HEK293 (cell line): ENCODE measurements at regions of chr19 and their contacts with region 1.

Region 1: GRCh38 chr19:34677386-34678084 is at the start of gene ZNF302:
- H3K4me3 ChIP-seq: peak within 1 kb of the TSS; percentile 68
- H3K27ac ChIP-seq: peak within 1 kb of the TSS; percentile 94
- H3K4me1 ChIP-seq: peaks cover 12% of the 10 kb centered on the region
- CTCF ChIP-seq: peak; percentile 65; the same call in 1 of the 2 replicates

Region 2: GRCh38 chr19:34662919-34663318 is 14.6 kb before region 1 on chr19:
- CTCF ChIA-PET with region 1: interaction called, 35 read pairs
- POLR2A ChIA-PET with region 1: interaction called, 7 read pairs
- H3K4me3 ChIP-seq: no peak overlapping the region
- H3K27ac ChIP-seq: no peak overlapping the region
- H3K4me1 ChIP-seq: no peaks in the 10 kb centered on the region; the same call in 1 of the 2 replicates
- CTCF ChIP-seq: peak; percentile 47; the same call in 1 of the 2 replicates

Region 3: GRCh38 chr19:34712395-34713261 is 35.1 kb after region 1 on chr19:
- CTCF ChIA-PET with region 1: interaction called, 12 read pairs
- POLR2A ChIA-PET with region 1: interaction called, 4 read pairs
- H3K4me3 ChIP-seq: no peak overlapping the region
- H3K27ac ChIP-seq: no peak overlapping the region
- H3K4me1 ChIP-seq: no peaks in the 10 kb centered on the region
- CTCF ChIP-seq: peak; percentile 91

Region 4: DNA sequence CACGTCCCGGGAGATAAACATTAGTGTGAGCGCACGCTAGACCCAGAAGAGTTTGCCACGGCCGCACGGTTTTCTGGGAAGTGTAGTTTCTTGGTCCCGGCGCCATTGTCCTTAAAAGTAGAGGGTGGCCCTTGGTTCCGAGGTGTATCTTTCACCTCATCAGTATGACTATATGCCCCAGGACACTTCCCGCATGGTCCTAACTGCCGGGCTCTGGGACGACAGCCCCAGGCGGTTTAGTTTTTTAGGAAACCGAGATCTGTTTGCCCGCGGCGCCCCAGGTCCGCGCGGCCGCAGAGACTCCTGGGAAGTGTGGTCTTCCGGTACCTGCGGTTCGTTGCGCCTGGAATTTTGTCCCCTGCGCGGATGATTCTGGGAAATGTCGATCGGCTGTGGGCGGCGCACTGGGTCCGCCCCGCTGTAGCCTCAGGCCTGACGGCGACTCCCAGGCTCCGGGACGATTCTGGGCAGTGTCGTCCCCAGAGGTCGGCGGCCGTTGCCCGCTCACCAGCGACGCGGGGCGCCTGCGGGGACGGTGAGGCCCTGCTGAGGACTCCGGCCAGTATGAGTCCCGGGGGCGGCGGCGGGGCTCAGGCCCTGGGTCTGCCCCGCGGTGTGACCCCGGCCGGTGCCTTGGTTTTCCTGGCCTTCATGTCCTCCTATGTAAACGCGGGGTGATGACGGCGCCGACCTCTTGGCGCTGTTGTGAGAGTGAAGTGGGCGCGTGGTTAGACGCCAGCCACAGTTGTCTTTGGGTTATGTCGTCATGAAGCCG is 56.5 kb after region 1 on chr19 and contains the start of gene ZNF181:
- CTCF ChIA-PET with region 1: no interaction called
- POLR2A ChIA-PET with region 1: interaction called, 24 read pairs
- H3K4me3 ChIP-seq: peak within 1 kb of the TSS; percentile 68
- H3K27ac ChIP-seq: peak within 1 kb of the TSS; percentile 96
- H3K4me1 ChIP-seq: peaks cover 14% of the 10 kb centered on the region
- CTCF ChIP-seq: peak; percentile 95

Region 5: GRCh38 chr19:34772697-34773554 is 95.4 kb after region 1 on chr19 and contains the start of gene ZNF599:
- CTCF ChIA-PET with region 1: no interaction called
- POLR2A ChIA-PET with region 1: interaction called, 16 read pairs
- H3K4me3 ChIP-seq: peak within 1 kb of the TSS; percentile 49
- H3K27ac ChIP-seq: peak within 1 kb of the TSS; percentile 42; the same call in 1 of the 2 replicates
- H3K4me1 ChIP-seq: peaks cover 5% of the 10 kb centered on the region; the same call in 1 of the 2 replicates
- CTCF ChIP-seq: no peak

Region 6: GRCh38 chr19:34926685-34927375 is 249.3 kb after region 1 on chr19 and contains the start of gene ZNF30:
- CTCF ChIA-PET with region 1: no interaction called
- POLR2A ChIA-PET with region 1: interaction called, 12 read pairs
- H3K4me3 ChIP-seq: peak within 1 kb of the TSS; percentile 51
- H3K27ac ChIP-seq: peak within 1 kb of the TSS; percentile 95
- H3K4me1 ChIP-seq: peaks cover 10% of the 10 kb centered on the region
- CTCF ChIP-seq: 0 out of 2 replicates have a peak, but pooled peaks have one; percentile 45

Region 7: DNA sequence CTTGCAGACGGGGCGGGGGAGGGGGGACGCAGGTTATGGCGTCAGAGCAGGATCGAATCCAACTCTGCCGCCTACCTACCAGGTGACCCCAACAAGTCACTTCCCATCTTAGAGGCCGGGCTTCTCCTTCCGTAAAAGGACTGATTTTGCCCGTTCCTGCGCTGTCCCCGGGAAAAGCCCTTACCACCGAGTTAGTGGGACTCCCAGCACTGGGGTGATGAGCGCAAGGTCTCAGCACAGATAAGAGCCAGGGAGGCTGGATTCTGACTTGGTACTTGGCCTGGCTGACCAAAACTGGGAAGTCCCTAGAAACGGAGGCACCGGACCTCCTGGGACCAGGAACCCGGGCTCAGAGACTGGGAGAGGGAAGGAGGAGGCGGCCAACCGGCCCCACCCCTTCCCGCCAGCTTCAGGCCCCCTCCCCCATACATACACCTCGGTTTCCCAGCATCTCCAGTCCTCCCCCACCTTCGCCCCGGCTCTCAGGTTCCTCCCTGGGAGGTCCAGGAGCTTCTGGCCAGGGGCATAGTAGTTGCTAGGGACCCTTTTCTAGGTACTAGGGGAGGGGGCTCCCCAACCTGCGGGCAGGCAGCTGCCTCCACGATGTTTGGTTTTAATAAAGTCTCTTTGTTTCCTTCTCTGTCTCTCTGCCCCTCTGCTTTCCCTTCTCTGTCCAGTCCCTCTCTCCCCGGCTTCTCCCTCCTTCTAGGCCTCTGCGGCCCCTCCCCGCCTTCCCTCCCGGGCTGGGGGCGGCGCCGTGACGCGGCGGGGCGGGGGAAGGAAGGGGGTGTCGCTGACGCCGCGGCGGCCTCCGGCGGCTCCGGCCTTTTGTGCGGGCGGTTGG is 322.2 kb after region 1 on chr19 and contains the start of gene GRAMD1A:
- CTCF ChIA-PET with region 1: no interaction called
- POLR2A ChIA-PET with region 1: interaction called, 11 read pairs
- H3K4me3 ChIP-seq: peak within 1 kb of the TSS; percentile 63
- H3K27ac ChIP-seq: peak within 1 kb of the TSS; percentile 98
- H3K4me1 ChIP-seq: peaks cover 35% of the 10 kb centered on the region
- CTCF ChIP-seq: no peak